Common myeloid progenitor, CD34-positive (primary cell): ENCODE measurements at regions of chr17 and their contacts with region 1.

Region 1: DNA sequence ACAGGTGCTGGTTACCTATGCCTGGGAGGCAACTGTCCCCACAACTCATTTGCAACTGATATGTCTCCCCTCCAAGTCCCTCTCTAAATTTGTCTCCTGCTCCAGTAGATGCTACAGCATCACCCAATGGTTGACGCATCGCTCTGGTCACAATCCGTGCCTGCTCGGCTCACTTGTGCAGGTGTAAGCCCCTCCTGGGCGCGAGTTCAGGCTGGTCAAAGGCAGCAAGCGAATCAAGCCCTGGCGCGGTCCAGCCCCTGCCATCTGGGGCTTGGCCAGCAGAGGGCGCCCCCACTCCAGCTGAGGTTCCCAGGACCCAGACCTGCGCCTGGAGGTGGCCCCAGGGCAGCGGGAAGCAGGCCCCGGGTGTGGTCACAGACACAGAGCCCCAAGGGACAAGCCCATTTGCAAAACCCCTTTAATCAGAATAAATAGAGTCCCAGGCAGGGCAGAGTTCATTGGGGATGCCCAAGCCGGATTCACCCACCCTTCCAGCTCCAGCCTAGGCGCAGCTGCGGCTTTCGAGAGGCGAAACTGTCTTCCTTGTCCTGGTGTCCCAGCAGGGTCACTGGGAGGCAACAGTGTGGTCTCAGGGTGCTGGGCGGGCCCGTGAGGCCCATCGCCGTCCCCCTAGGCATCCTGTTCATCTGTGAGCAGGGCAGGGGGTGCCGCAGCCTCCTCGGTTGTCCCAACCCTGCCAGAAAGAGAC is 15.9 kb downstream of the TMC6 start:
- DNase-seq: peak; percentile 52 to 67 (median 61)
- H3K4me3 ChIP-seq: no peak overlapping the region
- H3K27ac ChIP-seq: no peak overlapping the region
- H3K4me1 ChIP-seq: peaks cover 0 to 8% (median 4%) of the 10 kb centered on the region in 4 experiments
- H3K27me3 ChIP-seq: no peaks in the 10 kb centered on the region

Region 2: DNA sequence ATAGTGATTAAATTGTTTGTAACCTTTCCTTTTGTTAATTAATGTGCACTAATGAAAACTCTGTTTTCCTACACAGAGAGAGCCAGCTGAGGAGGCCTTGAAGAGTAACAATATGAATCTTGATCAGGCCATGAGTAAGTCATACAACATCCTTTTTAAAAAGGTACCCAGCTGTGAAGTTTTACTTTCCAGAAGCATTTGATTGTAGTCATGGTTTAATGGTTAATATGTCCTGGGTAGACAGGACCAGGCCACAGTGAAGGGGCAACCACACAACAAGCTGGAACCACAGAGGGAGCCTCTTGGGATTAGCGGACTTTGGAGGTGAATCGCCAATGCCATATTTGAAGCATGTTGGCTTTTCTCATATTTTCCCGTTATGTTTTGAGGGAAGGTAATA is 39.7 kb before region 1 on chr17:
- CTCF ChIA-PET with region 1: no interaction called
- POLR2A ChIA-PET with region 1: no interaction called
- DNase-seq: no peak
- H3K4me3 ChIP-seq: no peak overlapping the region
- H3K27ac ChIP-seq: no peak overlapping the region
- H3K4me1 ChIP-seq: no peaks in the 10 kb centered on the region
- H3K27me3 ChIP-seq: no peaks in the 10 kb centered on the region

Region 3: GRCh38 chr17:78128551-78129350 is 16.1 kb after region 1 on chr17 and contains the start of gene TMC6:
- CTCF ChIA-PET with region 1: interaction called, 122 read pairs
- POLR2A ChIA-PET with region 1: interaction called, 3 read pairs
- DNase-seq: peak in 2 of 3 donors; percentile 76 to 82
- H3K4me3 ChIP-seq: peak within 1 kb of the TSS; percentile 46 to 88 (median 70)
- H3K27ac ChIP-seq: peak within 1 kb of the TSS in 1 of 2 experiments; percentile 79
- H3K4me1 ChIP-seq: peaks cover 0 to 90% (median 87%) of the 10 kb centered on the region in 4 experiments
- H3K27me3 ChIP-seq: no peaks in the 10 kb centered on the region

Region 4: GRCh38 chr17:78133971-78134898 is 21.6 kb after region 1 on chr17:
- CTCF ChIA-PET with region 1: interaction called, 122 read pairs
- POLR2A ChIA-PET with region 1: interaction called, 3 read pairs
- DNase-seq: peak; percentile 82 to 91 (median 91)
- H3K4me3 ChIP-seq: peak overlapping the region in 4 of 7 experiments; percentile 6 to 58 (median 37)
- H3K27ac ChIP-seq: no peak overlapping the region
- H3K4me1 ChIP-seq: peaks cover 3 to 86% (median 80%) of the 10 kb centered on the region in 4 experiments
- H3K27me3 ChIP-seq: no peaks in the 10 kb centered on the region